ENCODE measurements at regions of chr3 and their contacts with region 1.

Region 1: GRCh38 chr3:78666470-78666800 is 1101.4 kb downstream of the ROBO1 start:
- DNase-seq: peak; percentile 89
- ATAC-seq: peak; percentile 99
- H3K4me3 ChIP-seq: peak overlapping the region; percentile 41
- H3K27ac ChIP-seq: peak overlapping the region; percentile 76
- H3K4me1 ChIP-seq: peaks cover 27% of the 10 kb centered on the region
- H3K27me3 ChIP-seq: no peaks in the 10 kb centered on the region
- CTCF ChIP-seq: no peak

Region 2: DNA sequence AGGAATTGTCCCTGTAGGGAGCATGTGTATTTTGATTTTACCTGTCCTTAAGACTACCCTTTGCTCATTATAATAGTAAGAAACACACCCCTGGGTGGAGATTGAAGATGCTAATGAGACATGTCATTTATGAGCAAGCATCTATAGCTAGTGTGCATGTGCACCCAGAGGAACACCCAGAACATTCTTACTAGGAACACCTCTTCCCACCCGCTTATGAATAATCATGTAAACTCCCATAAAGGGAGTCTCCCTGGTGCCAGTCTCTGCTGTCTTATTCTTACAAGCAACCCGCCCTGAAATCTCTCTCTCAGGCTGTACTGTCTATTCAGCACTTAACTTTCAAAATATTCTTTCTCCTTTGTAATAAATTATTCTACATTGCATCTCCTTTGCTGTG is 126.0 kb before region 1 on chr3:
- CTCF ChIA-PET with region 1: no interaction called
- POLR2A ChIA-PET with region 1: no interaction called
- intact Hi-C with region 1: no loop called
- DNase-seq: no peak
- ATAC-seq: 0 out of 2 replicates have a peak, but pooled peaks have one; percentile 20
- H3K4me3 ChIP-seq: no peak overlapping the region
- H3K27ac ChIP-seq: no peak overlapping the region
- H3K4me1 ChIP-seq: no peaks in the 10 kb centered on the region
- H3K27me3 ChIP-seq: no peaks in the 10 kb centered on the region
- CTCF ChIP-seq: no peak

Region 3: DNA sequence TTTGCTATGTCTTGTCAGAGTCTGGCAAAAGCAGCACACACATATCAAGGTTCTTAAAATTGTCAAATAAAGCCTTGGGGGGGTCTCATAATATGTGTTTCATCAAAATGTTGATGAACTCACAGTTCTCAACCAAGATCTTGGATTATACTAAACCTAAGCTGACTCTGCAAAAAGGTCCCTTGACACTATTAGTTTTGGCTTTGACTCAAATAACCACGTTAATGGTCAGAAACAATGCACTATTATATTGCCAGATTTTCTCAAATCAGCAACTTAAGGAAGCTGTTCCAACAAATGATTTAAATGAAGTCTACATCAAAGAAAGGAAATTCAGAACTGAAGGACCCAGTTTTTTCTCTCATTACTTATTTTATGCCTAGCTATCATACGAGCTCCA is 37.5 kb after region 1 on chr3:
- CTCF ChIA-PET with region 1: no interaction called
- POLR2A ChIA-PET with region 1: no interaction called
- intact Hi-C with region 1: loop called (anchors 5 kb)
- DNase-seq: peak; percentile 13
- ATAC-seq: no peak
- H3K4me3 ChIP-seq: no peak overlapping the region
- H3K27ac ChIP-seq: no peak overlapping the region
- H3K4me1 ChIP-seq: peaks cover 16% of the 10 kb centered on the region; the same call in 1 of the 2 replicates
- H3K27me3 ChIP-seq: no peaks in the 10 kb centered on the region
- CTCF ChIP-seq: no peak

Region 4: GRCh38 chr3:78765671-78766485 is 99.4 kb after region 1 on chr3:
- CTCF ChIA-PET with region 1: no interaction called
- POLR2A ChIA-PET with region 1: no interaction called
- intact Hi-C with region 1: loop called (anchors 5 kb)
- DNase-seq: peak; percentile 50
- ATAC-seq: peak; percentile 83
- H3K4me3 ChIP-seq: peak overlapping the region; percentile 34
- H3K27ac ChIP-seq: peak overlapping the region; percentile 30; the same call in 1 of the 2 replicates
- H3K4me1 ChIP-seq: peaks cover 19% of the 10 kb centered on the region
- H3K27me3 ChIP-seq: no peaks in the 10 kb centered on the region
- CTCF ChIP-seq: no peak

Region 5: GRCh38 chr3:78978037-78978436 is 311.6 kb after region 1 on chr3:
- CTCF ChIA-PET with region 1: no interaction called
- POLR2A ChIA-PET with region 1: no interaction called
- intact Hi-C with region 1: loop called (anchors 2 kb)
- DNase-seq: peak; percentile 59
- ATAC-seq: peak; percentile 58
- H3K4me3 ChIP-seq: no peak overlapping the region
- H3K27ac ChIP-seq: no peak overlapping the region
- H3K4me1 ChIP-seq: 0 out of 2 replicates have a peak, but pooled peaks cover under 1% of the 10 kb centered on the region
- H3K27me3 ChIP-seq: no peaks in the 10 kb centered on the region
- CTCF ChIP-seq: peak; percentile 79

Region 6: GRCh38 chr3:79497447-79498111 is 831.1 kb after region 1 on chr3:
- CTCF ChIA-PET with region 1: no interaction called
- POLR2A ChIA-PET with region 1: no interaction called
- intact Hi-C with region 1: loop called (anchors 10 kb)
- DNase-seq: peak; percentile 50
- ATAC-seq: no peak
- H3K4me3 ChIP-seq: no peak overlapping the region
- H3K27ac ChIP-seq: no peak overlapping the region
- H3K4me1 ChIP-seq: no peaks in the 10 kb centered on the region
- H3K27me3 ChIP-seq: no peaks in the 10 kb centered on the region
- CTCF ChIP-seq: peak; percentile 81